Sciatic nerve (tissue), 2 donors: ENCODE measurements at regions of chr3 and their contacts with region 1.

Region 1: DNA sequence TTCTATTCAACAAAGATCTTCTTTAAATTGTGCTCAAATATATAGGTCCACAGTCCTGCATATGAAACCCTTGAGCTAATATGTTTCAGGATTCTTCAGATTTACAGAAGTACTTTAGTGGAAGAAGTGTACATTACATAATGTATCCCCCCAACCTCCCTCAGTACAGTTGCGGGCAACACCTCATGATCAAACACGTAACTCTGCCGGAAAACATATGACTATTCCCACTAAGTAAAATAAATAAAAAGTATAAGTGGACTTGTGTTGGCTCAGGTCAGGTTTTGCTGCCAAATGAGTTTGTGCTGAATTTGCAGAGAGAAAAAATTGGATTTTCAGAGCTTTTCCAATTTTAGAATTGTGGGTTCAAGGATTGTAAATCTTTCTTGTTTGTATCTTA is 267.6 kb upstream of the MDFIC2 start:
- DNase-seq: no peak
- ATAC-seq: no peak

Region 2: DNA sequence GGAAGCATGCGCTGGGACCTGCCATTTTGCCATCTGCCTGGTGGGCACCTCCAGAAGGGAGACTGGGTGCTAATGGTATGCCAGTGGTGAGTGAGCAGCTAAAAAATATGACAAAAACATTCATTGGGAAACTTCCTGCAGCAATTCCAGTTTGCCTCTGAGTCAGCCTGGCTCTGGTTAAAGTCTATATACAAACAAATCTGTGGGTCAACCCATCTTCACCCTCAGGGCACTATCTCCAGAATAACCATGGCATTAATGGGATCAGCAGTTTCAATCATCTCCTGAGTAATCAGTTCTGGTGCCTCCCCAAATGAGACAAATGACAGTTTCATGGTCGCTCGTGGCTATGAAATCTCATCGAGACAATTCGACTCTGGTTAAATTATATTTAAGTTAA is 1215.7 kb before region 1 on chr3:
- intact Hi-C with region 1: loop called (anchors 5 kb)
- DNase-seq: no peak
- ATAC-seq: no peak